GM13977 (cell line): ENCODE measurements at regions of chr1 and their contacts with region 1.

Region 1: GRCh38 chr1:41268154-41268770 is 26.2 kb upstream of the SCMH1 start:
- DNase-seq: peak; percentile 78
- CTCF ChIP-seq: peak; percentile 97

Region 2: DNA sequence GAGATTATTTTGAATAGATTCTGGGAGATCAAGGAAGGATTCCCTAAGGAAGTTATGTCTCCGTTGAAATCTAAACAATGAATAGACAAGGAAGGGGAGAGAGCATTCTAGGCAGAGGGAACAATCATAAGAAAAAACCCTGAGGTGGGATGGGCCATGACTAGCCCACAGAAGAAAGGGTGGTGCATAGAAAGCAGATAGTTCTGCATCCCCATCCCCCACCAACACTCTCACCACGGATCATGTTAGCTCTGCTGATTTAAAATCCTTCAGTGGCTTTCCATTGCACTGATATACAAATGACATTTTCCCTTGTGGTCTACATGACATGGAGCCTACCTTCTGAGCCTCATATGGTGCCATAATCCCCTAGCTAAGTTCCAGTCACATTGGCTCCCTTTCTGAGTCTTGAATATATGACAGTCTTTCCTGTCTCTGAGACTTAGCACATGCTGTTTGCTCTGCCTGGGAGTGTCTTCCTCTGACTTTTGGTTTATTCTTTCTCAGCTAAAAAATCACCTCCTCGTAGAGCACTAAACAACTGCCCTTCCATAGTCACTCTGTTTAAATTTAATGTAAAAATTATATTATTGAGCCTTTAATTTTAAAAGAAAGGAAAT is 41.3 kb before region 1 on chr1:
- in situ Hi-C with region 1: no loop called
- DNase-seq: no peak
- CTCF ChIP-seq: no peak

Region 3: GRCh38 chr1:41432481-41433280 is 164.4 kb after region 1 on chr1:
- in situ Hi-C with region 1: loop called (anchors 10 kb)
- DNase-seq: peak; percentile 87
- CTCF ChIP-seq: peak; percentile 94